Naive thymus-derived CD4-positive, alpha-beta T cell (primary cell): ENCODE measurements at regions of chr3 and their contacts with region 1.

Region 1: GRCh38 chr3:67113802-67114407 is 115.8 kb downstream of the KBTBD8 start:
- DNase-seq: peak; percentile 29 to 78 (median 65)
- ATAC-seq: peak; percentile 93
- H3K4me3 ChIP-seq: no peak overlapping the region
- H3K4me3 Mint-ChIP-seq: no peak overlapping the region
- H3K27ac ChIP-seq: no peak overlapping the region
- H3K27ac Mint-ChIP-seq: no peak overlapping the region
- H3K4me1 ChIP-seq: no peaks in the 10 kb centered on the region
- H3K4me1 Mint-ChIP-seq: peaks cover 0 to 6% (median 0%) of the 10 kb centered on the region in 7 donors
- H3K27me3 ChIP-seq: no peaks in the 10 kb centered on the region
- H3K27me3 Mint-ChIP-seq: peaks cover 7 to 31% (median 21%) of the 10 kb centered on the region in 5 donors

Region 2: DNA sequence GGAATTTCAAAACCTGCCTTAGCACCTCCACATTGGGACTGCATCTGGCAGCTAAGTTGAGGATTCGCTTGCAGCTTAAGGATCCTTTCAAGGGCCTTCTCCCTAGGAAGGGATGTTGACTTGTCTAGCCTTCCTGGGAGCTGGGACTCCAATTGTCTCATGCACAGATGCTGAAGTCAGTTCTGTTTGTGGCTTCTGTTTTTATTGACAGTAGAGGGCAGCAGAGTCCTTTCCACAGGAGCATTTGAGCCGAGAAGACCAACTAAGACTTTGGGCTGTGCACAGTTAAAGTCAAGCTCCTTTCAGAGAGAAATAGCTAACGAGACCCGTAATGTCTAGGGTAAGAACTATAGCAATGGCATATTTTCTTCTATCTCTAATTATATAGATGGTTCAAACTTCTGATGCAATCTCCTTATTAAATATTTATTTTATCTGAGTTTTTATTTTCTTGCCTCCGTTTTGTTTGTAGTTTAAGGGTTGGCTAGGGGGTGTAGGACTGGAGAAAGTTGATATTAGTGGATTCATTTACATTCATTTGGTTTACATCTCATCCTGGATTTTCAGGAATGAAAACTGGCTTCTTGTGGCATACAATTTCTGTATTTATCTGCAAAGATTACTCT is 175.5 kb before region 1 on chr3:
- CTCF ChIA-PET with region 1: interaction called, 6 read pairs
- POLR2A ChIA-PET with region 1: no interaction called
- intact Hi-C with region 1: loop called (anchors 1 to 2 kb)
- DNase-seq: peak in 7 of 9 donors; percentile 10 to 46 (median 38)
- ATAC-seq: peak; percentile 54
- H3K4me3 ChIP-seq: no peak overlapping the region
- H3K4me3 Mint-ChIP-seq: no peak overlapping the region
- H3K27ac ChIP-seq: no peak overlapping the region
- H3K27ac Mint-ChIP-seq: no peak overlapping the region
- H3K4me1 ChIP-seq: no peaks in the 10 kb centered on the region
- H3K4me1 Mint-ChIP-seq: no peaks in the 10 kb centered on the region
- H3K27me3 ChIP-seq: no peaks in the 10 kb centered on the region
- H3K27me3 Mint-ChIP-seq: peaks cover 7 to 35% (median 22%) of the 10 kb centered on the region in 5 donors

Region 3: GRCh38 chr3:67123914-67124313 is 10.0 kb after region 1 on chr3:
- CTCF ChIA-PET with region 1: interaction called, 10 read pairs
- POLR2A ChIA-PET with region 1: no interaction called
- intact Hi-C with region 1: no loop called
- DNase-seq: no peak
- ATAC-seq: no peak
- H3K4me3 ChIP-seq: no peak overlapping the region
- H3K4me3 Mint-ChIP-seq: no peak overlapping the region
- H3K27ac ChIP-seq: no peak overlapping the region
- H3K27ac Mint-ChIP-seq: no peak overlapping the region
- H3K4me1 ChIP-seq: no peaks in the 10 kb centered on the region
- H3K4me1 Mint-ChIP-seq: no peaks in the 10 kb centered on the region
- H3K27me3 ChIP-seq: no peaks in the 10 kb centered on the region
- H3K27me3 Mint-ChIP-seq: peaks cover 0 to 26% (median 14%) of the 10 kb centered on the region in 5 donors

Region 4: DNA sequence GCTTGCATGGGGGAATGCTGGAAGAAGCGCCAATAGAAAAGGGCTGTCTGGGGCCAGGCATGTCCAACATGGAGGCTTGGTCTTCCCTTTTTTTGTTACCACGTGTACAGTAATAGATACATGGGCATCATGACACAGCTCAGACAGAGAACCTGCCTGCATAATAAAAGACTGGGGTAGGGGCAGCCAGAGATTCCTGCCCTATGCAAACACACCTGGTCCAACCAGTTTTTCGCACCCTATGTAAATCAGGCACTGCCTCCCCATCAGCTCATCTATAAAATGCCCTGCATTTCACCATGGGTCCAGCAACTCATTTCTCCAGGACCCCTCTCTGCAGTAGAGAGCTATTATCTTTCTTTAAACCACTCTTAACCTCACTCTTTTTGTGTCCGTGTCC is 150.0 kb after region 1 on chr3:
- CTCF ChIA-PET with region 1: no interaction called
- POLR2A ChIA-PET with region 1: no interaction called
- intact Hi-C with region 1: no loop called
- DNase-seq: no peak
- ATAC-seq: no peak
- H3K4me3 ChIP-seq: no peak overlapping the region
- H3K4me3 Mint-ChIP-seq: no peak overlapping the region
- H3K27ac ChIP-seq: no peak overlapping the region
- H3K27ac Mint-ChIP-seq: no peak overlapping the region
- H3K4me1 ChIP-seq: no peaks in the 10 kb centered on the region
- H3K4me1 Mint-ChIP-seq: no peaks in the 10 kb centered on the region
- H3K27me3 ChIP-seq: no peaks in the 10 kb centered on the region
- H3K27me3 Mint-ChIP-seq: no peaks in the 10 kb centered on the region

Region 5: GRCh38 chr3:67704322-67704721 is 590.4 kb after region 1 on chr3:
- CTCF ChIA-PET with region 1: no interaction called
- POLR2A ChIA-PET with region 1: no interaction called
- intact Hi-C with region 1: loop called in 1 of 2 experiments (anchors 5 kb)
- DNase-seq: peak in 2 of 9 donors; percentile 4 to 11
- ATAC-seq: no peak
- H3K4me3 ChIP-seq: no peak overlapping the region
- H3K4me3 Mint-ChIP-seq: no peak overlapping the region
- H3K27ac ChIP-seq: no peak overlapping the region
- H3K27ac Mint-ChIP-seq: peak overlapping the region in 3 of 9 donors; percentile 2 to 57 (median 33)
- H3K4me1 ChIP-seq: no peaks in the 10 kb centered on the region
- H3K4me1 Mint-ChIP-seq: peaks cover 0 to 34% (median 18%) of the 10 kb centered on the region in 7 donors
- H3K27me3 ChIP-seq: no peaks in the 10 kb centered on the region
- H3K27me3 Mint-ChIP-seq: no peaks in the 10 kb centered on the region

Region 6: GRCh38 chr3:68017067-68017466 is 903.2 kb after region 1 on chr3:
- CTCF ChIA-PET with region 1: no interaction called
- POLR2A ChIA-PET with region 1: no interaction called
- intact Hi-C with region 1: loop called in 1 of 2 experiments (anchors 5 kb)
- DNase-seq: no peak
- ATAC-seq: no peak
- H3K4me3 ChIP-seq: no peak overlapping the region
- H3K4me3 Mint-ChIP-seq: no peak overlapping the region
- H3K27ac ChIP-seq: no peak overlapping the region
- H3K27ac Mint-ChIP-seq: no peak overlapping the region
- H3K4me1 ChIP-seq: no peaks in the 10 kb centered on the region
- H3K4me1 Mint-ChIP-seq: peaks cover 0 to 17% (median 7%) of the 10 kb centered on the region in 7 donors
- H3K27me3 ChIP-seq: no peaks in the 10 kb centered on the region
- H3K27me3 Mint-ChIP-seq: peaks cover 0 to 2% (median 0%) of the 10 kb centered on the region in 5 donors

Region 7: GRCh38 chr3:68876112-68876713 is 1762.3 kb after region 1 on chr3:
- CTCF ChIA-PET with region 1: interaction called, 58 read pairs
- POLR2A ChIA-PET with region 1: no interaction called
- intact Hi-C with region 1: loop called (anchors 1 kb)
- DNase-seq: peak in 7 of 9 donors; percentile 30 to 63 (median 51)
- ATAC-seq: peak; percentile 69
- H3K4me3 ChIP-seq: no peak overlapping the region
- H3K4me3 Mint-ChIP-seq: no peak overlapping the region
- H3K27ac ChIP-seq: no peak overlapping the region
- H3K27ac Mint-ChIP-seq: no peak overlapping the region
- H3K4me1 ChIP-seq: no peaks in the 10 kb centered on the region
- H3K4me1 Mint-ChIP-seq: no peaks in the 10 kb centered on the region
- H3K27me3 ChIP-seq: no peaks in the 10 kb centered on the region
- H3K27me3 Mint-ChIP-seq: peaks cover 5 to 28% (median 25%) of the 10 kb centered on the region in 5 donors